ENCODE measurements at regions of chr6 and their contacts with region 1.

Region 1: DNA sequence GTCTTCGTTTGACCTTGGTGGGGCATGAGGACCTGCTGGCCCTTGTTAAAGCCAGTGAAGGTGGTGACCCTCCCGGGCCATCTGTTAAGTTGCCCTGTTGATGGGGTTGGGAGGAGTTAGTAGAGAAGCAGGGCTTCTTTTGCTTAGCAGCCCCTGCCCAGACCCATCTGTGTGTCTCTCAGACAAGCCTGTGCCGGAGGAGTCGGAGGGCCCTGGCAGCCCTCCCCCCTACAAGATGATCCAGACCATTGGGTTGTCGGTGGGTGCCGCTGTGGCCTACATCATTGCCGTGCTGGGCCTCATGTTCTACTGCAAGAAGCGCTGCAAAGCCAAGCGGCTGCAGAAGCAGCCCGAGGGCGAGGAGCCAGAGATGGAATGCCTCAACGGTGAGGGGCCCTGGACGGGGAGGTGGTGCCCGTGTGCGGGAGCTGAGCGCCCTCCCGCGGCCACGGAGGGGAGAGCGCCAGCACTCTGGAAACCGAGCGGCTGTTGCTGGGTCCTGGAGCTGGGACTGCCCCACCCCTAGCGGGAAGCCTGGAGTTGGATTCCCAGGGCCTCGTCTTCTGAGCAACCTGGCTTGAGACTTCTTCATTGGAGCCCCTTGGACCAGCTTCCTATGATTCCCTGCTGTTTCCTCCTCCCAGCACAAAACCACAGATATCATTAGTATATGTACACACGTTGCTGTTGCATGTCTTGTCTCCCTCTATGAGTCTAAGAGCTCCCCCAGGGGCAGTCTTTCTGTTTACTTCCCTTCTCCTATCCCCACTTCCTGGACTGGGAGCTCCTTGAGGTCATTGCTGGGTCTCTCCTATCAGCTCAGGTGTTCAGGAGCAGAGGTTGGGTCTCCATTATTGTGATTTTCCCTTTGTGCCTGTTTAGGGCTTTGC is 27.6 kb upstream of the SRF start:
- DNase-seq: peak; percentile 75
- H3K4me3 ChIP-seq: no peak overlapping the region
- CTCF ChIP-seq: peak; percentile 98

Region 2: GRCh38 chr6:42996513-42996912 is 147.0 kb before region 1 on chr6:
- CTCF ChIA-PET with region 1: interaction called, 15 read pairs
- POLR2A ChIA-PET with region 1: no interaction called
- DNase-seq: no peak
- H3K4me3 ChIP-seq: no peak overlapping the region
- CTCF ChIP-seq: no peak

Region 3: DNA sequence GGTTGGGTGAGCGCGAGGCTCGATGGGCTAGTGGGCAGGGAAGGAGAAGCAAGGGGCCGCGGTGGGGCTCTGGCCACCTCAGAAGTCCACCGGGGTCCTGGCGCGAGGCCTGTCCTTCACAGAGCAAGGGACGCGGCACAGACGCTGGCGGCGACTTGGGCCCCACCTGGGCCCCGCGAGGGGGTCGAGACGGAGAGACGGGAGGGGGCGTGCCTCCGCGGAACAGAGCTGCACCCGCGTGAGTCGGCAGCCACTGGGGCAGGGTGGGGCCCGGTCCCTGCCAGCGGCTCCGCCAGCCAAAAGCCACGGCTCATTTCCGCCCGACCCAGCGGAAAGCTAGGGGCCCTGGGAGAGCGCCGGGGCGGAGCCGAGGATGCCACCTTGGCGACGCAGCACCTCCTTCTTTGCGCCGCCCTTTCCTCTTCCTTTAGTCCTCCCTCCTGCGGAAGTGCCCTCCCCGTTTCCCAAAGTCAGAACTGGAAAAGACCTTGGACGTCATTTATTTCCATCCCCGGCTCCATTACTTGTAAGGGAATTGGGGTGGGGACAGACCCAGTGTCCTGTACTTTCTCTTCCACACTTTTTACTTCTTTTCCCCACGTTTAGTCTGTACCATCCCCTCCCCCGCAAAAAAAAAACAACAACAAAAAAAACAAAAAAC is 89.8 kb before region 1 on chr6 and contains the start of gene CUL7:
- CTCF ChIA-PET with region 1: interaction called, 51 read pairs
- POLR2A ChIA-PET with region 1: interaction called, 7 read pairs
- DNase-seq: peak; percentile 64
- H3K4me3 ChIP-seq: peak within 1 kb of the TSS; percentile 88
- CTCF ChIP-seq: no peak

Region 4: GRCh38 chr6:43075670-43076463 is 67.6 kb before region 1 on chr6 and contains the start of gene PTK7:
- CTCF ChIA-PET with region 1: interaction called, 183 read pairs
- POLR2A ChIA-PET with region 1: interaction called, 20 read pairs
- DNase-seq: no peak
- H3K4me3 ChIP-seq: peak within 1 kb of the TSS; percentile 94
- CTCF ChIP-seq: no peak

Region 5: DNA sequence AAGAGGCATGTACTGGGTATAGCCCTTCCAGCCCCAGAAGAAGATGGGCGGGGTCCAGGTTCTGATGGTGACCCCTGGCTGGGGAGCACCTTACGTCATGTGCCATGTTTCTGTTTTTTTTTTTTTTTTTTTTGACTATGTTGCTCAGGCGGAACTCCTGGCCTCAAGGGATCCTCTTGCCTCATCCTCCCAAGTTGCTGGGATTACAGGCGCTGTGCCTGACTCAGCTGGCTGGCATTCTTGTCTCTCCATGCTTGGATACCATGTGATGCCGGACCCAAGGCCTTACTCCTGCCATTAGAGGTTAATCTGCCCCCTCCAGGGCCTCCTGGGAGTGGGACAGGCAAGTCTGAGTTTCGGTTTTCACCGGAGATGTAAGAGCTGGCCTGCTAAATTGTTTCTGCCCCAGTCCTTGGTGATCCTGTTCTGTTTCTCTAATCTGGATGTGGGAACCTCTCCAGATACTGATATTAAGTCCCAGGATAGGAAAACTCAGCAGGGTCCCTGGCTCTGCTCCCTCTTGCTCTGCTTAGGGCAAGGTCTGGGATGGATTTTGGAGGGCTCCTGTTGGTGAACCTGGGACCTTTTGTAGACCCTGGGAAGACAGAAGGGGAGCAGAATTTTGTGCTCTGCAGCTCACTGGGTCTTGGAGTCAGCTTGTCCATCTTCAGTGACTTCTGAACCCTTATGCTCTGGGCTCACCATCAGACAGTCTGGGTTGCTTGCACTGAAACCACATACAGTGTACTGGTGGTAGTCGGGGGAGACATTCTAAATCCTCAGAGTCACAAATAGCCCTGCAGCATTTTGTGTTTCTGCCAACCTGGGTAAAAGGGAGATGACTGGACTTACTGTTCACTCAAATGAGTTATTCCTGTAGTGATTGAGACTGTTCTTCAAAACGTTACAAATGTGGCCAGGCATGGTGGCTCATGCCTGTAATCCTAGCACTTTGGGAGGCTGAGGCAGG is 22.3 kb before region 1 on chr6:
- CTCF ChIA-PET with region 1: interaction called, 13 read pairs
- POLR2A ChIA-PET with region 1: interaction called, 3 read pairs
- DNase-seq: peak; percentile 99
- H3K4me3 ChIP-seq: peak overlapping the region; percentile 37
- CTCF ChIP-seq: peak; percentile 17

Region 6: GRCh38 chr6:43247113-43247999 is 103.9 kb after region 1 on chr6:
- CTCF ChIA-PET with region 1: no interaction called
- POLR2A ChIA-PET with region 1: no interaction called
- DNase-seq: no peak
- H3K4me3 ChIP-seq: peak overlapping the region; percentile 44
- CTCF ChIP-seq: no peak

Region 7: GRCh38 chr6:43355862-43356590 is 212.5 kb after region 1 on chr6:
- CTCF ChIA-PET with region 1: no interaction called
- POLR2A ChIA-PET with region 1: no interaction called
- DNase-seq: no peak
- H3K4me3 ChIP-seq: no peak overlapping the region
- CTCF ChIP-seq: peak; percentile 34

Measured in AG04449 (cell line).